Mammary epithelial cell (primary cell): ENCODE measurements at regions of chr16 and their contacts with region 1.

Region 1: GRCh38 chr16:22898874-22899348 is 84.9 kb downstream of the HS3ST2 start:
- DNase-seq: peak; percentile 67
- H3K4me3 ChIP-seq: no peak overlapping the region
- H3K27ac ChIP-seq: no peak overlapping the region
- H3K4me1 ChIP-seq: peaks cover 22% of the 10 kb centered on the region
- H3K27me3 ChIP-seq: no peaks in the 10 kb centered on the region
- CTCF ChIP-seq: peak; percentile 80 to 90

Region 2: GRCh38 chr16:22948603-22949368 is 49.9 kb after region 1 on chr16:
- CTCF ChIA-PET with region 1: no interaction called
- dilution Hi-C with region 1: no loop called
- in situ Hi-C with region 1: loop called in 1 of 2 experiments (anchors 5 kb)
- intact Hi-C with region 1: loop called (anchors 1 kb)
- DNase-seq: peak; percentile 73
- H3K4me3 ChIP-seq: no peak overlapping the region
- H3K27ac ChIP-seq: no peak overlapping the region
- H3K4me1 ChIP-seq: peaks cover 8% of the 10 kb centered on the region
- H3K27me3 ChIP-seq: no peaks in the 10 kb centered on the region
- CTCF ChIP-seq: peak; percentile 84 to 90

Region 3: DNA sequence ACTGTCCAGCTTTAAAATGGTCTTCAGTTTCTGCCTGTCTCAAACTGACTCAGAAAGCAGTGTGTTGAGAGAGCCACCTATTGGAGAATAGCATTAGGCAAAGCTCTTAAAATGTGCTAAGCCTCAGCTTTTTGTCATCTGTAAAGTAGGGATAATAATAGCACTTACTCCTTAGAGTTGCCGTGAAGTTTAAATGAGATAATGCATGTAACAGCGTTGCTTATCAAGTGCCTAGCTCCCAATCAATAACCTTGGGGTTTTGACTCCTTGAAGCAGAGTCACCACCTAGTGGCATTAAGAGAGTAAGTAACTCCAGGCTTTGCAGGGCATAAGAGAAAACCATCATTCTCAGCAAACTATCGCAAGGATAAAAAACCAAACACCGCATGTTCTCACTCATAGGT is 78.4 kb after region 1 on chr16:
- CTCF ChIA-PET with region 1: no interaction called
- dilution Hi-C with region 1: no loop called
- in situ Hi-C with region 1: no loop called
- intact Hi-C with region 1: loop called (anchors 1 kb)
- DNase-seq: peak; percentile 8
- H3K4me3 ChIP-seq: no peak overlapping the region
- H3K27ac ChIP-seq: no peak overlapping the region
- H3K4me1 ChIP-seq: no peaks in the 10 kb centered on the region
- H3K27me3 ChIP-seq: no peaks in the 10 kb centered on the region
- CTCF ChIP-seq: peak; percentile 40 to 58

Region 4: GRCh38 chr16:23060458-23061320 is 161.8 kb after region 1 on chr16:
- CTCF ChIA-PET with region 1: no interaction called
- dilution Hi-C with region 1: no loop called
- in situ Hi-C with region 1: loop called in 1 of 2 experiments (anchors 5 kb)
- intact Hi-C with region 1: loop called (anchors 1 kb)
- DNase-seq: peak; percentile 57
- H3K4me3 ChIP-seq: no peak overlapping the region
- H3K27ac ChIP-seq: no peak overlapping the region
- H3K4me1 ChIP-seq: peaks cover 7% of the 10 kb centered on the region
- H3K27me3 ChIP-seq: no peaks in the 10 kb centered on the region
- CTCF ChIP-seq: peak; percentile 83 to 90